ENCODE measurements at regions of chr6 and their contacts with region 1.

Region 1: DNA sequence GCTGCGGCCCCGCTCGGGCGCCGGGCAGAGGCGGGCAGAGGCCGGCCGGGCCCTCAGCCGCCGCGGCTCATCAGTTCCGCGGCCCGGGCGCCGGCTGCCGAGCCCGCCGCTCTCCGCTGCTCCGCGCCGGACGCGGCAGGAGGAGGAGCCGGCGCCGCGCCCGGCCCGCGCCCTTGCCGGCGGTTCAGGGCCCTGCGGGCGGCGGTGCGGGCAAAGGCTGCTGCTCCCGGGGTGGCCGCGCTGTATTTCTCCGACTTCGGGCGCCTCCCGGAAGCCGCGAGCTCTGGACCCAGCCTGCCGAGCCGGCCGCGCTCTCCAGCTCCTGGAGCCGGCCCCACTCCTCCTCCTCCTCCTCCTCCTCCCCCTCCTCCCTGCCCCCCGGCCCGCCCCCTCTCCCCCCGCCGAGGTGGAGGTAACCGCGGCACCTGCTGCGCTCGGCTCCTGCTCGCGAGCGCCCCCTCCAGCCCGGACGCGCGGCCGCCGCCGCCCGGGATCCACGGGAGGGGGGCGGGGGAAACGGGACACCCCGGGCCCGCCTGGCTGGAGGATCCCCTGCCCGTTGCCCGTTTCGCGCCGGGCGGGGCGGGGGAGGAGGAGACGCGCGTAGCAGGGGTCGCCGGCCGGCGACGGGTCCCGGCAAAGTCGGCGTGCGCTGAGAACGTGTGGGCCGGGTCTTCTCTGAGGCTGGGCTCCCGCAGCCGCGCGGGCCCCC is at the start of gene SLC22A23:
- DNase-seq: peak; percentile 63 to 84 (median 71)
- H3K4me3 ChIP-seq: peak within 1 kb of the TSS in 3 of 4 donors; percentile 22 to 64 (median 54)
- H3K27ac ChIP-seq: peak within 1 kb of the TSS in 2 of 5 donors; percentile 32 to 52
- H3K4me1 ChIP-seq: peaks cover 14 to 24% of the 10 kb centered on the region in 2 donors
- H3K27me3 ChIP-seq: no peaks in the 10 kb centered on the region
- CTCF ChIP-seq: peak; percentile 19 to 75 (median 52)
- POLR2A ChIP-seq: peak in 1 of 2 donors; percentile 33
- total RNA-seq, gene SLC22A23: 2.6 to 18.5 (median 7.0) TPM

Region 2: GRCh38 chr6:3186974-3187382 is 269.9 kb before region 1 on chr6:
- intact Hi-C with region 1: no loop called
- DNase-seq: no peak
- H3K4me3 ChIP-seq: no peak overlapping the region
- H3K27ac ChIP-seq: no peak overlapping the region
- H3K4me1 ChIP-seq: no peaks in the 10 kb centered on the region
- H3K27me3 ChIP-seq: no peaks in the 10 kb centered on the region
- CTCF ChIP-seq: no peak
- POLR2A ChIP-seq: no peak

Region 3: DNA sequence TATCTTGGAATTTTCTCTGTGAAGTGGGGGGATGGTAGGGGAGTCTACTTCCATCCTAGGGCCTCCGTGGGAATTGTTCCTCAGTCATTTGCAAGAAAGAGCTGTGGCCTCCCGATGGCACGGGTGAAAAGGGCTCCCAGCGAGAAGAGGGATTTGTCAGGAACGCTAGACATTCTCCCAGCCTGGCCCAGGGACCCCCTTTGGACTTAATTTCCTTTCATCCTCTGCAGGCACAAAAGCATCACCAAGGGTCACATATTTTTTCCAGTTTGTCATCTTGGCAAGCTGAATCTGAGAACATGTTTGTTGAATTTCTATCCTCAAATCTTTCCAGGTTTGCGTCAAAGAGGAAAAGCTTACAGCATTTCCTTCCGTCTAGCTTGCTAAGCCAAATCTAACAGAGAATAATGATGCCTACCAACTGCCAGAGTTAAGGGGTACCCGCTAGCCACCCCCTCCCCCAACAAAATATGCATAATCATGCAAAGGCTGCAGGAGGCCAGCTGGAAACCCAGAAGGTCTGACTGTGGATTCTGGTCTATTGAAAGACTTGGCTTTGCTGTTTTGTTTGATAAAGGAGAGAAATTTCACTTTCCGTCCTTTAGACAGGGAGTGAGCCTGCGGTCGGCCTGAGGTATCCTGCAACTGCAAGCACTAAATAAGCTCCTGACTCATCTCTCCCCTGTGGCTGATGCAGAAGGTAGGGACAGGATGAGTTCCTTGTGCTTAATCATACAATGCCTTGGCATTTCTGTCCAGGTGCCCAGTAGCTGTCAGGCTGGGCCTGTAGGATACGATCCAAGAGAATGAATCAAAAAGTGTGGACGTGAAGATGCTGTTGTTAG is 175.1 kb before region 1 on chr6:
- intact Hi-C with region 1: loop called (anchors 5 kb)
- DNase-seq: peak in 4 of 7 donors; percentile 16 to 37 (median 34)
- H3K4me3 ChIP-seq: no peak overlapping the region
- H3K27ac ChIP-seq: peak overlapping the region in 2 of 5 donors; percentile 33 to 71
- H3K4me1 ChIP-seq: peaks cover 0 to 5% of the 10 kb centered on the region in 2 donors
- H3K27me3 ChIP-seq: no peaks in the 10 kb centered on the region
- CTCF ChIP-seq: no peak
- POLR2A ChIP-seq: no peak

Region 4: DNA sequence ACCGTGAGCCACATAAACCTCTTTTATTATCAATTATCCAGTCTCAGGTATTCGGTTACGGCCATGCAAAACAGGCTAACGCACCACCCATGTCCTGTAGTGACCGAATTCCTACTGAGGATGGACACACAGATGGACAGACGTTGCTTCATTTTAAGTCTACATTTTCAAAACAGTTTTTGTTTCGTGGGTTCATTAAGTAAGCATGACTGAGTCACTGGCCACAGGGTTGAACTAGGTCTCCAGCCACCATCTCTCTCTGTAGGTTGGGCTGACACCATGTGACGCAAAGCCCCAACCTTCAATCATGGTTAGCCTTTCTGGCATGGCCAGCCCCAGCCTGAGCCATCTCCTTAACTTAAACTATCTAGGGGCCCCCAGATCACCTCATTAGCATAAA is 109.9 kb after region 1 on chr6:
- intact Hi-C with region 1: no loop called
- DNase-seq: no peak
- H3K4me3 ChIP-seq: no peak overlapping the region
- H3K27ac ChIP-seq: no peak overlapping the region
- H3K4me1 ChIP-seq: no peaks in the 10 kb centered on the region
- H3K27me3 ChIP-seq: no peaks in the 10 kb centered on the region
- CTCF ChIP-seq: no peak
- POLR2A ChIP-seq: no peak